Mammary epithelial cell (primary cell): ENCODE measurements at regions of chr1 and their contacts with region 1.

Region 1: DNA sequence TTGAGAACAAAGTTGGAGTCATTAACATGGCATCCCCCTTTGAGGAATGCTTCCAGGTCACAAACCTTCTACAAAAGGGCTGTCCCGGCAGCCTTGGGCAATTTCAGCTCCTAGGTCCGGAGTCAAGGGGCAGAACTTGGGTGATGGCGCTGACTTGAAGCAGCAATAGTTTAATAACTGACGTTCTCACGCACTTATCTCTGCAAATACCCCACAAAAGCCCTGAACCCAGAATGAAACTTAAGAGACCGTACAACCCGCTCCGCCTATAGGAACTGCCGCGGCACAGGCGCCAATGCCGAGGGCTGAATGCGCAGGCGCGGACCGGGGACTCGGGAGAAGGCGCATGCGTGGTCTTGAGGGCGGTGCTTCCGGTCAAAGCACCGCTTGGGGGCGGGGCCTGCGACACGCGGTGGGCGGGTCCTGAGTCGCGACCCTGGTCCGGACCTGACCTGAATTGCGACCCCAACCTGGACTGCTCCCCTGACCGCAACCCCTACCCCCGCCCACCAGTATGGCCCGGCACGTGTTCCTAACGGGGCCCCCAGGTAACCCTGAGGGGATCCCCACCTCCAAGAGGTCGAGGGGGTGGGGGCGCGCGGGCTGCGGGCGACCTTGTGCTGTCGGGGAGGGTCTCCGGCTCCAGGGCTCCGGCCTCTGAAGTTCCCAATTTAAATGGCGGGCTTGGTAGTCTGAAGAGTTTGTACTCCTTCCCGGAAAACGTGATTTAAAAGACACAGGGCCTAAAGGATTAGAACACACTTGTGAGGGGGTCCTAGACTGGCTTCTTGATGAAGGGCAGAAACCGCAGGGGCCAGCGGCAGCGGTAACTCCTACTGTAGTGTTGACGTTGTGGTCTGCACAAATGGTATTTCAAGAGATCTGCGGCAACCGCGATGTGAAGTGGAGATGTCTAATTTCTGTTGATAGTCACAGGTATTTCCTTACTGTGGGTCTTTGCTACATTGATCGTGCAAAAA is at the start of gene NTPCR:
- DNase-seq: peak; percentile 86
- H3K4me3 ChIP-seq: peak within 1 kb of the TSS; percentile 78 to 94 (median 86)
- H3K27ac ChIP-seq: peak within 1 kb of the TSS; percentile 64
- H3K4me1 ChIP-seq: peaks cover 26% of the 10 kb centered on the region
- H3K27me3 ChIP-seq: no peaks in the 10 kb centered on the region
- CTCF ChIP-seq: peak in 1 of 2 donors; percentile 15
- total RNA-seq, gene NTPCR: 15.3 to 47.0 TPM

Region 2: GRCh38 chr1:232793944-232794343 is 156.5 kb before region 1 on chr1:
- CTCF ChIA-PET with region 1: no interaction called
- dilution Hi-C with region 1: no loop called
- in situ Hi-C with region 1: no loop called
- intact Hi-C with region 1: loop called (anchors 10 kb)
- DNase-seq: peak; percentile 47
- H3K4me3 ChIP-seq: no peak overlapping the region
- H3K27ac ChIP-seq: no peak overlapping the region
- H3K4me1 ChIP-seq: no peaks in the 10 kb centered on the region
- H3K27me3 ChIP-seq: peaks cover 1% of the 10 kb centered on the region
- CTCF ChIP-seq: peak in 1 of 2 donors; percentile 51

Region 3: DNA sequence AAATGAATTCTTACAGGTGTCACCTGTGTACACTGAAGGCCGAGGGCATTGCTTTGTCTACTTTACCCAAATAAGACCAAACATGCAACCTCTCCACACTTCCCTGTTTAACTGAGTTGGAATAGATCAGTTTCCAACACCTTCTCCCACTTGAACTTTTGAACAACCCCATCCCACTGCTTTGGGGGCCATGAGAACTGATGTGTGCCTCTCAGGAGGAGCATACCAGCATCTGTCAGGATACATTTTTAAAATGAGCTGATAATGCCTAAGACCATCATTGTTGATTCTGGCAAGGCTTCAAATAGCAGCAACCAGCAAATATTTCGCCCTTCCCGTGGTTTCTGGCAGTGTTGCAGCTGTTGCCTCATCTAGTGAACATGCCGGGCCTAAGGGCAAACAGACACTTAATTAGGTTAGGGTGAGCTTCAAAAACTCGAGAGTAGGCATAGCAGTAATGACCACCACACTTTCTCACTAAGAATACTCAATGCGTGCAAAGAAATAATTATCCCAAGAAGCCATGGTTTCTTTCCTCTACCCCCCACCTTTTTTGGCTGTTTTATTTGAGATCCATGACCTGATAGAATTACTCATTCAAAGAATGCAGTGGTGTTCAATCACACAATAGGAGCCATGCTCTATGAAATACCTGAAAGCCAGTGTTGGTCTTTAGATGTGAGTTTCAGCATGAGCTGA is 81.5 kb before region 1 on chr1:
- CTCF ChIA-PET with region 1: no interaction called
- dilution Hi-C with region 1: no loop called
- in situ Hi-C with region 1: no loop called
- intact Hi-C with region 1: loop called (anchors 1 kb)
- DNase-seq: peak; percentile 90
- H3K4me3 ChIP-seq: no peak overlapping the region
- H3K27ac ChIP-seq: peak overlapping the region; percentile 74
- H3K4me1 ChIP-seq: peaks cover 30% of the 10 kb centered on the region
- H3K27me3 ChIP-seq: no peaks in the 10 kb centered on the region
- CTCF ChIP-seq: no peak